ENCODE measurements at regions of chr5 and their contacts with region 1.

Region 1: GRCh38 chr5:147628058-147628895 is 118.4 kb upstream of the DPYSL3 start:
- DNase-seq: peak; percentile 53

Region 2: GRCh38 chr5:147658293-147658932 is 30.1 kb after region 1 on chr5:
- CTCF ChIA-PET with region 1: no interaction called
- POLR2A ChIA-PET with region 1: no interaction called
- DNase-seq: no peak

Region 3: GRCh38 chr5:147822686-147823491 is 194.6 kb after region 1 on chr5:
- CTCF ChIA-PET with region 1: interaction called, 21 read pairs
- POLR2A ChIA-PET with region 1: no interaction called
- DNase-seq: peak; percentile 48

Measured in HEK293T (cell line).